ENCODE measurements at regions of chr1 and their contacts with region 1.

Region 1: DNA sequence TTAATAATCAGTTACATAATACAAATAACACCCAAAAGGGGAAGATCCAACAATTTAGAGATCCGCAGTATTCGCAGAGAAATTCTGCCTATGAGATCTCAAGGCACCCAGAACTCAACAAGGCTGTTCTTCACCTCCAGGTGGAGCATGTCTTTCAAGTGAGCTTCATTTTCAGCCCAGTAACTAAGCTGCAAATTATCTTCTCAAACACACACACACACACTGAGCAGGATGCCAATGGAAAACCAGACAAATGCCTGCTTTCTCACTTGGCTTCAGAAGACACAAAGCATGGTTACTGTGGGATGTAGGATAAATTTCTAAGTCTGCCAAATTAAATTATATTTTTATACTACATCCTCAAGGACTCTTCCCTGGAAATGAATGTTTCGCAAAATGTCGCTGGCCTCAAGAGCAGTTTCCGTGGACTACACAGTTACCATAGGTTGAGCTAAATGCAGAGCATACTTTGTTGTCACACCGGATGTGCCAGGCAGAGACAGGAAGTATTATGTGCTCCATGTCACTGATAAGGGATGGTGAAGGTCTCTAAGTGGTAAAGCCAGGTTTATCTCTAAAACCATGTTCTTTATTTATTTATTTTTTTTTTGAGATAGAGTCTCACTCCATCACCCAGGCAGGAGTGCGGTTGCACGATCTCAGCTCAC is 30.3 kb downstream of the UBR4 start:
- DNase-seq: peak; percentile 36 to 53
- H3K4me3 ChIP-seq: no peak overlapping the region
- H3K4me3 Mint-ChIP-seq: no peak overlapping the region
- H3K27ac Mint-ChIP-seq: no peak overlapping the region
- H3K4me1 ChIP-seq: peaks cover 11% of the 10 kb centered on the region; the same call in 1 of the 2 replicates
- H3K4me1 Mint-ChIP-seq: peaks cover 18% of the 10 kb centered on the region
- H3K27me3 ChIP-seq: no peaks in the 10 kb centered on the region
- H3K27me3 Mint-ChIP-seq: no peaks in the 10 kb centered on the region
- CTCF ChIP-seq: peak; percentile 19 to 58

Region 2: GRCh38 chr1:19128968-19129514 is 50.7 kb before region 1 on chr1:
- CTCF ChIA-PET with region 1: no interaction called
- POLR2A ChIA-PET with region 1: no interaction called
- intact Hi-C with region 1: no loop called
- DNase-seq: no peak
- H3K4me3 ChIP-seq: no peak overlapping the region
- H3K4me3 Mint-ChIP-seq: no peak overlapping the region
- H3K27ac Mint-ChIP-seq: no peak overlapping the region
- H3K4me1 ChIP-seq: no peaks in the 10 kb centered on the region
- H3K4me1 Mint-ChIP-seq: peaks cover 7% of the 10 kb centered on the region
- H3K27me3 ChIP-seq: no peaks in the 10 kb centered on the region
- H3K27me3 Mint-ChIP-seq: no peaks in the 10 kb centered on the region
- CTCF ChIP-seq: no peak

Region 3: GRCh38 chr1:19197845-19198244 is 18.1 kb after region 1 on chr1:
- CTCF ChIA-PET with region 1: interaction called, 4 read pairs
- POLR2A ChIA-PET with region 1: interaction called, 5 read pairs
- intact Hi-C with region 1: loop called (anchors 2 kb)
- DNase-seq: no peak
- H3K4me3 ChIP-seq: no peak overlapping the region
- H3K4me3 Mint-ChIP-seq: no peak overlapping the region
- H3K27ac Mint-ChIP-seq: no peak overlapping the region
- H3K4me1 ChIP-seq: peaks cover 44% of the 10 kb centered on the region
- H3K4me1 Mint-ChIP-seq: peaks cover 39% of the 10 kb centered on the region
- H3K27me3 ChIP-seq: no peaks in the 10 kb centered on the region
- H3K27me3 Mint-ChIP-seq: no peaks in the 10 kb centered on the region
- CTCF ChIP-seq: no peak

Region 4: GRCh38 chr1:19209990-19210771 is 30.4 kb after region 1 on chr1 and contains the start of gene UBR4:
- CTCF ChIA-PET with region 1: interaction called, 4 read pairs
- POLR2A ChIA-PET with region 1: no interaction called
- intact Hi-C with region 1: loop called (anchors 5 kb)
- DNase-seq: peak; percentile 95
- H3K4me3 ChIP-seq: peak within 1 kb of the TSS; percentile 95
- H3K4me3 Mint-ChIP-seq: peak within 1 kb of the TSS; percentile 92
- H3K27ac Mint-ChIP-seq: peak within 1 kb of the TSS; percentile 90
- H3K4me1 ChIP-seq: peaks cover 28% of the 10 kb centered on the region
- H3K4me1 Mint-ChIP-seq: peaks cover 20% of the 10 kb centered on the region
- H3K27me3 ChIP-seq: no peaks in the 10 kb centered on the region
- H3K27me3 Mint-ChIP-seq: no peaks in the 10 kb centered on the region
- CTCF ChIP-seq: no peak
- total RNA-seq, gene UBR4: 317 and 318 TPM in 2 replicates

Region 5: DNA sequence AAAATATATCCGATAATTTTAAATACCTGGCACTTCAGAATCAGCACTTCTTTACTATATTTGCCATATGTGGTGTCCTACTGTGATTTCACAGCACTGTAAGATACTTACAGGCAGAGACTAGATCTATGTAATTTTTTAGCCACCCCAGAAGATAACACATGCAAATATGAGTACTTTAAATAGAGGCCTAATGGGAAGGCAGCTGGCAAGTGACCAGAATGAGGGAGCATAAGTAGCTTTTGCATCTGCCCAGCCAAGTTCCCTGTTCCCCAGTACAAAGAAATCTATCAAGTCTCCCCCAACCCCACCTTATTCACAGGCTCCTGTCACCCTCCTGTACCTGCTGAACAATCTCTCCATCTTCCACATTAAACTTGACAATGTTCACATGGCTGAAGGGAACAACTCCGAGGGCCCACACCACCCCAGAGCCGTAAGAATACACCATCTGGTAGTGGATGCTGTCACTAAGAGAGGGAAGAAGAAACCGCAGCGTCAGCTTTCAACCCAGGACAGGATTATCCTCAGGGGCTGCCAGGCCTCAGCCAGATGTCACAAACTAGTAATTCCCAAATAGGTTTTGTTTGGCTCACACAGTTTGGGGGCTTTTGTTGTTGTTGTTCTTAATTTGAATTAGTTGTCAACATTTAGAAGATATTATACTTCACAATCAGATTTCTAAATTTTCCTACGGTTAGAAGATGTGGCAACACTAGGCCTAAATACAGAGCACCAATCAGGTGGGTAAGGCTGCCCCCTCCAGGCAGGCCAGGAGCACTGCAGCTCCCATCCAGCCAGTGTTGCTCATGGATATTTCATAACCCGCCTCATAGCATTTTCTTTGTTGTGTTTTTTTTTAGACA is 61.2 kb after region 1 on chr1:
- CTCF ChIA-PET with region 1: interaction called, 16 read pairs
- POLR2A ChIA-PET with region 1: no interaction called
- intact Hi-C with region 1: loop called (anchors 1 kb)
- DNase-seq: peak; percentile 52 to 78
- H3K4me3 ChIP-seq: no peak overlapping the region
- H3K4me3 Mint-ChIP-seq: no peak overlapping the region
- H3K27ac Mint-ChIP-seq: no peak overlapping the region
- H3K4me1 ChIP-seq: no peaks in the 10 kb centered on the region
- H3K4me1 Mint-ChIP-seq: no peaks in the 10 kb centered on the region
- H3K27me3 ChIP-seq: no peaks in the 10 kb centered on the region
- H3K27me3 Mint-ChIP-seq: no peaks in the 10 kb centered on the region
- CTCF ChIP-seq: peak; percentile 76 to 86

Region 6: DNA sequence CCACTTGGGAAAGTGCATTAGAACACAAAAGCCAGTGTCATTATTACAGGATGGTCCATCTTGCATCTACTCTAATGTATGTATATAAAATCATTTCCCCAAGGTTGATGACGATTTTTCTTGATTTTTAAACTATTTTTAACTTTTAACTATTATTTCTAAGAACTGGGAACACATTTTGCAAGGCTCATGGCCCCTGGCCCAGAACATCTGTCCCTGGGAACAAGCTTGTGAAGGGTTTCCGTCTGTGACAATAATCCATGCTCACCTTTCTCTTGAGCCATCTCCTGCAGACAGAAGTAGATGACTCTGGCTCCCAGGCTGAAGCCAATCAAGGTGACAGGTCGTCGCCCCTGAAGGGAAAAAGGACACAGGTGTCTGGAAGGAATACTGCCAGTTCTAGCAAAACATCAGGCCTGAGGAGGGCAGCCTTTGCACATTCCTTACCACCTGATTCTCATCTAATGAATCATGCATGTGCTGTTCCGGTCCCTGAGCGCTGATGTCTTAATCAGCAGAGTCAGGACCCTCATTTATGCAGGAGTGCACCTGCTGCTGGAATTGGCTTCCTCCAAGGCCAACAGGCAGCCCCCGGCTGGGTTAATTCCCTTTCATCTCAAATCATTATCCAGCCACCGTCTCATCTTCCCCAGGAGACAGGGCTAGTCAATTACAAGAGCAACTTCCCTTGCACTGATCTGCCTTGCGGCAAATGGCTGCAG is 557.5 kb after region 1 on chr1:
- CTCF ChIA-PET with region 1: no interaction called
- POLR2A ChIA-PET with region 1: no interaction called
- intact Hi-C with region 1: no loop called
- DNase-seq: peak in 1 of 2 experiments; percentile 16
- H3K4me3 ChIP-seq: no peak overlapping the region
- H3K4me3 Mint-ChIP-seq: no peak overlapping the region
- H3K27ac Mint-ChIP-seq: no peak overlapping the region
- H3K4me1 ChIP-seq: peaks cover 16% of the 10 kb centered on the region; the same call in 1 of the 2 replicates
- H3K4me1 Mint-ChIP-seq: peaks cover 11% of the 10 kb centered on the region
- H3K27me3 ChIP-seq: no peaks in the 10 kb centered on the region
- H3K27me3 Mint-ChIP-seq: no peaks in the 10 kb centered on the region
- CTCF ChIP-seq: peak in 1 of 2 experiments; percentile 32